ENCODE measurements at regions of chr5 and their contacts with region 1.

Region 1: DNA sequence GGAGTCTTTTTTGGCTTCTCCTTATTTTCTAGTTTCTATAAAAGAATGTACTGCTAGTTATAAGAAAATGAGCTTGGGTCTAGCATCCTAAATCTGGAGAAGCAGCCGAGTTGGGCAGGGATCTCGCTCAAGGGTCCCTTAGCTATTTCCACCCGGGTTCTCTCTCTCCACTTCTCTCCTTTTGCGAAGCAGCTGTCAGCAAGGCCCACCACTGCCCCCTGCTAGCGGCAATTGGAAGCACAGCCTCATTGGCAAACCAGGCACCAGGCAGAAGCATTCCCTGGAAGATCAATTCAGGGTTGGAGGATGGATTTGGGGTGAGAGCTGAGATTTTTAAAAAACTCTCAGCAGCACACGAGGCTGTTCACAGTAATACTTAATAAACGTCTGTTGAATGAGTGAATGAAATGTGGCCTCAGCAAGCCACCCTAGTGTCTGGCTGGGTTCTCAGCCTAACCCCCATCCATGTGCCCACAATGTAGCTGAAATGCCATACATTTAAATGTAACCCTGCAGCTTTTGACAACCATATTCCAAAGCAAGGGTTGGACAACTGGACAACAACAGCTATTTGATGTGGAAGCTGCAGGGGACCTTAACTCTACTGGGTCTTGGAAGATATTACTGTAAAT is 34.6 kb upstream of the TNIP1 start:
- DNase-seq: peak; percentile 85

Region 2: DNA sequence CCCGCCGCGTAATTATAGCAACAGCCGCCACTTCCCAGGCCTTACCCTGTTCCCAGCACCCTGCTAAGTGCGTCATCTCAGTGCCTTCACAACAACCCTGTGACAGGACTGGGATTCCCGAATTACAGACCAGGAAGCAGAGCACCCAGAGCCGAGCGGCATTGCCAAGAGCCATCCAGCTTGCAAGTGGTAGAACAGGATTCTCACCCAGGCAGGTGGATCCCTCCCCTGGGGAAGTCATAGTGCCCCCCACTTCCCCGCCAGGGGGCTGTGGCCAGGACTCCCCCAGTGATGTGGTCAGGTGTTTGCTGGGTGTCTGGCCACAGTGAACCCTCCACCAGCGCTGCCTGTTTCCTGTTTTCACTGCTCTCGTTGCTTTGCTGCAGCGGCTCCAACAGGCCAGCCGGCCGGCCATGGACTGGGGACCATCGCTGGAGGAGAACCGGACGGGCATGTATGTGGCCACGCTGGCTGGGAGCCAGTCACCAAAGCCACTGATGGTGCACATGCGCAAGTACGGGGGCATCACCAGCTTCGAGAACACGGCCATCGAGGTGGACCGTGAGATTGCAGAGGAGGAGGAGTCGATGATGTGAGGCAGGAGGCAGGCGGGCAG is 906.3 kb before region 1 on chr5:
- CTCF ChIA-PET with region 1: no interaction called
- POLR2A ChIA-PET with region 1: no interaction called
- DNase-seq: no peak

Region 3: DNA sequence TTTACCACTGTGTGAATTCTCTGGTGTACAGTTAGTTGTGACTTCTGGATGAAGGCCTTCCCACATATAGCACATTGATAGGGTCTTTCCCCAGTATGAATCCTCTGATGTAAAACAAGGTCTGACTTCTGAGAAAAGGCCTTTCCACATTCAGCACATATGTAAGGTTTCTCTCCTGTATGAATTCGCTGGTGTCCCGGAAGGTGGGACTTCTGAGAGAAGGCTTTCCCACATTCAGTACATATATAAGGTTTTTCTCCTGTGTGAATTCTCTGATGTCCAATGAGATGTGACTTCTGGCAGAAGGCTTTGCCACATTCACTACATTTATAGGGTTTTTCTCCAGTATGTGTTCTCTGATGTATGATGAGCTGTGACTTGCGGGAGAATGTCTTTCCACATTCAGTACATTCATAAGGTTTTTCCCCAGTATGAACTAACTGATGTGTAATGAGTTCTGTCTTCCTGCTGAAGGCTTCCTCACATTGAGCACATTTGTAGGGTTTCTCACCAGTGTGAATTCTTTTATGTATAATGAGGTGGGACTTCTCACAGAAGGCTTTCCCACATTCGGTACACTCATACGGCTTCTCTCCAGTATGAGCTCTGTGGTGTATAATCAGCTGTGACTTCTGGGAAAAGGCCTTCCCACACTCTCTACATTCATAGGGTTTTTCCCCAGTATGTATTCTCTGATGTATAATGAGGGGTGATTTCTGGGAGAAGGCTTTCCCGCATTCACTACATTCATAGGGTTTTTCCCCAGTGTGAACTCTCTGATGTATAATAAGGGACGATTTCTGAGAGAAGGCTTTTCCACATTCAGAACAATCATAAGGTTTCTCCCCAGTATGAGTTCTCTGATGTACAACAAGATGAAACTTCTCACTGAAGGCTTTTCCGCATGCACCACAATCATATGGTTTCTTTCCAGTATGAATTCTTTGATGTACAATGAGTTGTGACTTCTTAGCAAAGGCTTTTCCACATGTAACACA is 219.7 kb before region 1 on chr5:
- CTCF ChIA-PET with region 1: no interaction called
- POLR2A ChIA-PET with region 1: no interaction called
- DNase-seq: no peak

Region 4: DNA sequence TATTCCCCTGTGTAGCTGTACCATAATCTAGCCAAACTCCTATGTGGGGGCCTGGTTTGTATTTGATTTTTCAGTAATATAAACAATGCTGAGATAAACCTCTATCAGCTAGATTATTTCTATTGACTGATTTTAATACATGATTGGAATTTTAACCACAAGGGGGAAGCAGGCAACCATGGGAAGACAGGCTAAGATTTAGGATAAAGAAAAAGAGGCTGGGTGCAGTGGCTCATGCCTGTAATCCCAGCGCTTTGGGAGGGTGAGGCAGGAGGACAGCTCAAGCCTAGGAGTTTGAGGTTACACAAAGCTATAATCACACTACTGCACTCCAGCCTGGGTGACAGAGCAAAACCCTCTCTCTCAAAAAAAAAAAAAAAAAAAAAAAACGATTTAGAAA is 113.1 kb before region 1 on chr5:
- CTCF ChIA-PET with region 1: interaction called, 20 read pairs
- POLR2A ChIA-PET with region 1: no interaction called
- DNase-seq: no peak

Region 5: DNA sequence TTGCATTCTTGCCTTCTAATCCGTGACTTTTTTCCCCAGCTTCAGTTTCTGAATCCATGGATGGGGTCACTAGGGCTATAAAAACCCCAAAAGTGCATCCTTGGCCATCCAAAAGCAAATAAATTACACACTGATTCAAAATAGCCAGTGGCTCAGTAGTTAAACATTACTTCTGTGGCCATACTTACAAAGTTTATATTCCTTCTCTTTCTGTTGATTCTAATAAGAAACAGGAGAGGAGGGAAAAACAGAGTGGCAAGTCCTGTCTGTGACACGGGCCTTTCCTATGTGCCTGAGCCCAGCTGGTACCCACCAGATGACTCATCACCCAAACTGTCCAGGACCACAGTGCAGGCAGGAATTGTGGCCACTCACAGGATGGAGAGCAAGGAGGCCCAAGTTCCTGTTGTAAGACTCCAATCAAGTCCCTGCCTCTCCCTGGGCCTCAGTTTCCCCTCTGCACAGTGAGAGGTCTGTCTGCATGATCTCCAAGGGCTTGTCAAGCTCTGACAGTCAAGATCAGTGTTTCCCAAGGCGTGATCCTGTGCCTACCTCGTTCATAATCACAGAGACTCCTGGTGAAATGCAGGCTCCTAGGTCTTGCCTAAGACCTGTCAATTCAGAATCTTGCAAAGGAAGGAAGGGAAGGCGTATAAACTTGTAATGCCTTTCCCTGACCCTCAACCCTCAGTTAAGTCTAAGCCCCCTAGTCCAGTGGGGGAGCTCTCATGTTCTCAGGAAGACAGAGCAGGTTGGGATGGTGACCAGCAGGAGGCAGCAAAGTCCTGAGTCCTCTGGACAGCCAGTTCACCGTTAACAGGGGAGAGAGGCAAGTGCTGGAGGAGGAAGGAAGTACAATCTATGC is 64.1 kb before region 1 on chr5:
- CTCF ChIA-PET with region 1: interaction called, 99 read pairs
- POLR2A ChIA-PET with region 1: interaction called, 4 read pairs
- DNase-seq: peak; percentile 81

Region 6: DNA sequence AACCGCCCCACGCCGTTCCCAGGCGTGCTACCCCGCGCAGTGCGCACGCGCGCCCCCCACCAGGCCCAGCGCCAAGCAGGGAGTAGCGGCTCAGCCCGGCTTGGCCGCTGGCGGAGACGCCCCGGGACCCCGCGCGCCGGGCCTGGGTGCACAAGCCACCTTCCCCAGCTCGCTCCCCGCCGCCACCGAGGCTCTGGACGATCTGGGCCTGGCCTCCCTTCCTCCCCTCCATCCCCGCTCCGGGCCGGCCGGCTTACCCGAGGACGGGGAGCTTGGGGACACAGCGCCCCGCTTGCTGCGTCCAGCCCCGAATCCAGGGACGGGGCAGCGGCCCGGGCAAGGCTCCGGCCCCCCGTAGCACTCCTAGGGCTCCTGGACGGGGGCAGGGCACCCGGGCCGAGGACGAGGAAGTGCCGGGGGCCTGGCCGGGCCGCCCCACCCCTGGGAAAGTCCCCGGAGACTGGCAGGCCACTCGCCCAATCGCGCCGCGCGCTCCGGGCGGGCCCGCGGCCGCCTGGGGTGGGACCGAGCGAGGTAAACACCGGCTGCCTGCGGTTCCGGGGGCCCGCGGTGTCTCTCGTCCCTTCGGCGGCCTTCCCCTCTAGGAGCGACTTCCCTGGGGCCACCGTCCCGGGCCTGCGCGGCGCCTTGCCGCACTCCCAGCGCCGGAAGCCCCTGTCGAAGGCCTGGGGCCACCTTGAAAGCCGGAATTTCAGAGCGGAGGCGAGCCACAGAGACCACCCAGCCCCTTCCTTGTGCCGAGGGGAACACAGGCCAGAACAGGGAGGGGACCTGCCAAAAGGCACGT is 34.6 kb before region 1 on chr5 and contains the start of gene TNIP1:
- CTCF ChIA-PET with region 1: interaction called, 10 read pairs
- POLR2A ChIA-PET with region 1: interaction called, 3 read pairs
- DNase-seq: peak; percentile 94

Region 7: GRCh38 chr5:151126199-151126645 is 10.8 kb after region 1 on chr5:
- CTCF ChIA-PET with region 1: interaction called, 21 read pairs
- POLR2A ChIA-PET with region 1: no interaction called
- DNase-seq: peak; percentile 69

Region 8: GRCh38 chr5:151164686-151165392 is 49.4 kb after region 1 on chr5:
- CTCF ChIA-PET with region 1: interaction called, 37 read pairs
- POLR2A ChIA-PET with region 1: no interaction called
- DNase-seq: peak; percentile 73

Region 9: GRCh38 chr5:151252762-151253604 is 137.6 kb after region 1 on chr5 and contains the start of gene GM2A:
- CTCF ChIA-PET with region 1: interaction called, 11 read pairs
- POLR2A ChIA-PET with region 1: no interaction called
- DNase-seq: peak; percentile 97

Measured in HEK293T (cell line).